ENCODE measurements at regions of chr9 and their contacts with region 1.

Region 1: DNA sequence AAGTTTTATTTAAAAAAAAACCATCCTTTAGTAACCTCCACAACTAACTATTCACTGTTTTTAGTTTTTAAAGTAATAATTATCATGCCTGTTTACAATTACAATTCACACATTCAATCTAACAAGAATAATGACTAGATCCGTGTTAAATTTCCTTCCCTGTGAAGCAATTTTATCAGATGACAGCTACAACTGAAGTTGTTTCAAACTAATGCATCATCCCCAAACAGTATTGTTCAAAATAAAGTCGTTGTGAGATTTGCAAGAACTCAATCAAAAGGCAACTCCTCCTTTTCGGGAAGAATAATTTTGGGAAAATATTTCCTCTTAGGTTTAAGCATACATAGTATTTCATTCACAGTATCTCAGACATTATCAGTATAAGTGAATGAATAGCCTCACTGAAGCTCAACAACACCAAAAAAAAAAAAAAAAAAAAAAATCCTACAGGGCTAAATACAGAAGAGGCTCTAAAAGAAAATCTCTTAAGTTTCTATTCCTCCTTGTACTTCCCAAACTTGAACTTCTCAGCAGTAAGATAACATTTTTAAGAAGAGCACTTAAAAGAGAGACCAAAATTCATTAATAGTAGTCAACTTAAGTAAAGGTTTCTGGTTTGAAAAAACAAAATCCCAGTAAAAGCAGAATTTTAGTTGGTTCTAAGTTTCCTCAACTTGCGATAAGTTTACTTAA is 9.4 kb downstream of the C9orf72 start:
- DNase-seq: no peak
- H3K4me3 ChIP-seq: no peak overlapping the region
- H3K27ac ChIP-seq: no peak overlapping the region
- H3K4me1 ChIP-seq: peaks cover 5% of the 10 kb centered on the region
- CTCF ChIP-seq: no peak

Region 2: DNA sequence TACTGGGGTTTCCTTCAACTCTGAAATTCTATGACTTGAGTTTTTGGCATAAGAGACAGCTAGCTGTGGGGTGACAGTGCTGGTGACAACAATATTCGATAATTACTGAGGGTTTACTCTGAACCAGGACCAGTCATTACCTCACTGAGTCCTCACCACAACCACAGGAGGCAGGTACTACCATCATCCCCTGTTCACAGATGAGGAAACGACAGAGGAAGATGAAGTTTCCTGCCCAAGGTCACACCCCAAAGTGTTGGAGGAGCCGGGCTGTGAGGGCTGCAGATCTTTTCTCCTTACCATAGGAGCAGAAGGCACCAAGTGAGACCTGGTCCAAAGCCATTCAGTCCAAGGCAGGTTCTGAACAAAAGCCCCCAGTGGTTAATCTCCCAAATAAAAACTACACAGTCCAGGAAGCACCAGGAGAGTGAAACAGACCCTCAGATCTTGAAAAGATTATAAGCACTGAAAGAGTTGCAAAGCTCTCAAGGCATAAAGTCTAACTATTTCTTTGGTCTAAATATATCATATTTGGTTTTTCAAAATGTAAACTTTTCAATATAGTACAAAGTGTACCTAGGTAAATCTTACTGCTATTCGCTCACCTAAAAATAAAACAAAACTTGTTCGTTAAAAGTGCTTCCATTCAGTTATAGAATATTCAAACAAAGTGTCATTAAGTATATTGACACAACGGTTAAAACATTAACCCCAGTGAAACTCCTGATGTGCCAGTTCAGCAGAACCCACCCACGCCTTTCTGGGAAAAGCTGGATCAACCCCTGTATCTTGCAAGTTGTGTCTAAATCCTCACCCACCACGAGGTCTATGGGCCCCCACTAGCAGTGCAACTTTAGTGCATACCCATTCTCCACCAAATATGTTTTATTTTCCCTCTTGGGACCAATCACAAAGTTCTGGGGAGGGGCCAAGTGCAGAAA is 184.3 kb before region 1 on chr9:
- CTCF ChIA-PET with region 1: no interaction called
- POLR2A ChIA-PET with region 1: interaction called, 10 read pairs
- intact Hi-C with region 1: no loop called
- DNase-seq: no peak
- H3K4me3 ChIP-seq: no peak overlapping the region
- H3K27ac ChIP-seq: no peak overlapping the region
- H3K4me1 ChIP-seq: peaks cover 54% of the 10 kb centered on the region
- CTCF ChIP-seq: no peak

Measured in OCI-LY7 (cell line).